Caco-2 (cell line): ENCODE measurements at regions of chr12 and their contacts with region 1.

Region 1: GRCh38 chr12:26126340-26127284 is 1.8 kb upstream of the BHLHE41 start:
- DNase-seq: peak; percentile 86 to 89
- H3K4me3 ChIP-seq: peak overlapping the region; percentile 59
- H3K4me3 Mint-ChIP-seq: peak overlapping the region; percentile 88
- H3K27ac Mint-ChIP-seq: peak overlapping the region; percentile 71
- H3K4me1 ChIP-seq: peaks cover 20% of the 10 kb centered on the region
- H3K4me1 Mint-ChIP-seq: peaks cover 21% of the 10 kb centered on the region
- H3K27me3 ChIP-seq: peaks cover 11% of the 10 kb centered on the region
- H3K27me3 Mint-ChIP-seq: peaks cover 34% of the 10 kb centered on the region
- CTCF ChIP-seq: no peak

Region 2: DNA sequence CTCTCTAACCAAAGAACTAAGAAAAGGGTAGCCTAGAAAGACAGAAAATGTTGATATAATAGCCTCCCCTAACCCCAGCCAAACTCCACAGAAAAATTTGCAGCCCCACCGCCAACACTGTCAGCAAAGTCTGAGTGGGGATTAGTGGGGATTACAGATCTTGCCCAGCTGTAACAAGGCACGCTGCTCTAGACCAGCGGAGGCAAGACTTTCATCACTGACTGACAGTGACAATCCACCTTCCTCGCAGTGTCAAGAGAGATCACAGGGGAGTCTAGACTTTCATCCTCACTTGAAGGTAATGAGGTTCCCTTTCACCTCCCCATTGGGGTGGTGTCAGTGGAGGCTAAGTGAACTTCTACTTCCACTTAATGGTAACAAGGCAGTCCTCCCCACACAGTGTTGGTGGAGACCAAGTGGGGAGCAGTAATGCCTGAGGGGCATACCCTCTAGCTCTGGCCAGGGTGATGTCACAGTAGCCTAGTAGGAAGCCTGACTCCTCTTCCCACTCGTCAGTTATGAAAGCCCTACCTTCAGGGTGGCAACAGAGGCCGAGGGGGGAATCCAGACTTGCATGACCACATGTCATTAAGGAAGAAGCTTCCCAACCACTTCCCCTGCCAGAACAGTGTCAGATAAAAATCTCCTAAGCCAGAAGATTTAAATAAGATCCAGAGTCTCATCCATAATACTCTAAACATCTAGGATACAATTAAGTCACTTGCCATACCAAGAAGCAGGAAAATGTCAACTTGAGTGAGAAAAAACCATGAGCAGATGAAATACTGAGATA is 259.8 kb before region 1 on chr12:
- CTCF ChIA-PET with region 1: no interaction called
- POLR2A ChIA-PET with region 1: no interaction called
- intact Hi-C with region 1: no loop called
- DNase-seq: no peak
- H3K4me3 ChIP-seq: no peak overlapping the region
- H3K4me3 Mint-ChIP-seq: no peak overlapping the region
- H3K27ac Mint-ChIP-seq: peak overlapping the region; percentile 27
- H3K4me1 ChIP-seq: peaks cover 38% of the 10 kb centered on the region
- H3K4me1 Mint-ChIP-seq: peaks cover 20% of the 10 kb centered on the region
- H3K27me3 ChIP-seq: no peaks in the 10 kb centered on the region
- H3K27me3 Mint-ChIP-seq: no peaks in the 10 kb centered on the region
- CTCF ChIP-seq: no peak

Region 3: GRCh38 chr12:25884024-25884919 is 242.3 kb before region 1 on chr12:
- CTCF ChIA-PET with region 1: no interaction called
- POLR2A ChIA-PET with region 1: no interaction called
- intact Hi-C with region 1: no loop called
- DNase-seq: no peak
- H3K4me3 ChIP-seq: no peak overlapping the region
- H3K4me3 Mint-ChIP-seq: no peak overlapping the region
- H3K27ac Mint-ChIP-seq: peak overlapping the region; percentile 29
- H3K4me1 ChIP-seq: peaks cover 15% of the 10 kb centered on the region
- H3K4me1 Mint-ChIP-seq: peaks cover 16% of the 10 kb centered on the region
- H3K27me3 ChIP-seq: no peaks in the 10 kb centered on the region
- H3K27me3 Mint-ChIP-seq: no peaks in the 10 kb centered on the region
- CTCF ChIP-seq: no peak

Region 4: GRCh38 chr12:26113853-26114719 is 12.5 kb before region 1 on chr12:
- CTCF ChIA-PET with region 1: interaction called, 12 read pairs
- POLR2A ChIA-PET with region 1: interaction called, 5 read pairs
- intact Hi-C with region 1: loop called (anchors 1 kb)
- DNase-seq: peak; percentile 98
- H3K4me3 ChIP-seq: peak overlapping the region; percentile 77
- H3K4me3 Mint-ChIP-seq: peak overlapping the region; percentile 78
- H3K27ac Mint-ChIP-seq: peak overlapping the region; percentile 90
- H3K4me1 ChIP-seq: peaks cover 23% of the 10 kb centered on the region
- H3K4me1 Mint-ChIP-seq: peaks cover 18% of the 10 kb centered on the region
- H3K27me3 ChIP-seq: no peaks in the 10 kb centered on the region
- H3K27me3 Mint-ChIP-seq: peaks cover 2% of the 10 kb centered on the region
- CTCF ChIP-seq: peak; percentile 12 to 48

Region 5: GRCh38 chr12:26172539-26172938 is 45.9 kb after region 1 on chr12:
- CTCF ChIA-PET with region 1: no interaction called
- POLR2A ChIA-PET with region 1: no interaction called
- intact Hi-C with region 1: loop called (anchors 5 kb)
- DNase-seq: no peak
- H3K4me3 ChIP-seq: no peak overlapping the region
- H3K4me3 Mint-ChIP-seq: no peak overlapping the region
- H3K27ac Mint-ChIP-seq: no peak overlapping the region
- H3K4me1 ChIP-seq: peaks cover 4% of the 10 kb centered on the region; the same call in 1 of the 2 replicates
- H3K4me1 Mint-ChIP-seq: peaks cover 7% of the 10 kb centered on the region
- H3K27me3 ChIP-seq: no peaks in the 10 kb centered on the region
- H3K27me3 Mint-ChIP-seq: peaks cover 14% of the 10 kb centered on the region
- CTCF ChIP-seq: no peak

Region 6: GRCh38 chr12:26204612-26205289 is 78.1 kb after region 1 on chr12:
- CTCF ChIA-PET with region 1: no interaction called
- POLR2A ChIA-PET with region 1: no interaction called
- intact Hi-C with region 1: no loop called
- DNase-seq: no peak
- H3K4me3 ChIP-seq: no peak overlapping the region
- H3K4me3 Mint-ChIP-seq: no peak overlapping the region
- H3K27ac Mint-ChIP-seq: no peak overlapping the region
- H3K4me1 ChIP-seq: no peaks in the 10 kb centered on the region
- H3K4me1 Mint-ChIP-seq: no peaks in the 10 kb centered on the region
- H3K27me3 ChIP-seq: no peaks in the 10 kb centered on the region
- H3K27me3 Mint-ChIP-seq: peaks cover 6% of the 10 kb centered on the region
- CTCF ChIP-seq: no peak

Region 7: DNA sequence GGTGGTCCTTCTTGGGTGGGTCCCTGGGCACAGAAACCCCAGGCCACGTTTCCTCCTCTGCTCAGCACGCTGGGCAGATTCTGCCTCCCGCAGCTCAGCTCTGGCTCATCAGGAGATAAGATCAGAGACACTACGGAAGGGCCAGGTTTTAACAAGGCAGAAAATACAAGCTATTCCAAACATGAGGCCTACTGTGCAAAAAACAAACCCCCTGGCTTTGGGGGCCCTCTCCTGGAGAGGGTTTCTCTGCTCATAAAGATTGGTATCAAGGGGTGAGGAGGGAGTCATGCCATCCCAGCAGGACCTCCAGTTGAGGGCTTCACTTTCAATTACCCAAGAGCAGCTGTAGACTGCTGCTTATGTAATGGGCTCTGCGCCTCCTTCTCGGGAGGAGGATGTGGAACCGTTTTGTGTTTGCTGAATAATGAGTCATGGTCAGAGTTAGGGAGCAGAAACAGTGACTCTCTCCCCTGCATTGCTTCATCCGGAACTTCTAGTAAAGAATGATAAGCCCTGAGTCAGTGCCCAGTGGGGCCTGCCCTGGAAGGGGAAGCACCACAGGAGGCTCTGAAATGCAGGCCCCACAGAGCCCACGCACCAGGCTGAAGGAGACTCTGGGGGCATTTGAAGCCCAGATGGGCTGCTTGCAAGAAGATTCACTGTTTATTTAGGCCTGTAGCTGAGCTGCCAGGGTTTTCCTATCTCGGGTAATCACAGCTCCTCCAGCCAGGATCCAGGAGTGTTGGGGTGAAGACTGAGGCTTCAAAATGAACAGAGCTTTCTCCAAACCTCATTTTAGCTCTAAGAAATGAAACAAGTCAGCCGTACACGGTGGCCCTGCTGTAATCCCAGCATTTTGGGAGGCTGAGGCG is 148.1 kb after region 1 on chr12:
- CTCF ChIA-PET with region 1: interaction called, 5 read pairs
- POLR2A ChIA-PET with region 1: no interaction called
- intact Hi-C with region 1: loop called (anchors 2 kb)
- DNase-seq: peak; percentile 84 to 88
- H3K4me3 ChIP-seq: no peak overlapping the region
- H3K4me3 Mint-ChIP-seq: peak overlapping the region; percentile 6
- H3K27ac Mint-ChIP-seq: peak overlapping the region; percentile 92
- H3K4me1 ChIP-seq: peaks cover 47% of the 10 kb centered on the region
- H3K4me1 Mint-ChIP-seq: peaks cover 30% of the 10 kb centered on the region
- H3K27me3 ChIP-seq: no peaks in the 10 kb centered on the region
- H3K27me3 Mint-ChIP-seq: no peaks in the 10 kb centered on the region
- CTCF ChIP-seq: no peak

Region 8: GRCh38 chr12:26629864-26630263 is 503.3 kb after region 1 on chr12:
- CTCF ChIA-PET with region 1: no interaction called
- POLR2A ChIA-PET with region 1: no interaction called
- intact Hi-C with region 1: loop called (anchors 5 kb)
- DNase-seq: no peak
- H3K4me3 ChIP-seq: no peak overlapping the region
- H3K4me3 Mint-ChIP-seq: peak overlapping the region; percentile 14
- H3K27ac Mint-ChIP-seq: peak overlapping the region; percentile 51
- H3K4me1 ChIP-seq: peaks cover 57% of the 10 kb centered on the region
- H3K4me1 Mint-ChIP-seq: peaks cover 55% of the 10 kb centered on the region
- H3K27me3 ChIP-seq: no peaks in the 10 kb centered on the region
- H3K27me3 Mint-ChIP-seq: no peaks in the 10 kb centered on the region
- CTCF ChIP-seq: peak in 1 of 2 experiments; percentile 11